IMR-90 (cell line): ENCODE measurements at regions of chr1 and their contacts with region 1.

Region 1: GRCh38 chr1:94755675-94756074 is 64.5 kb upstream of the SLC44A3 start:
- DNase-seq: peak; percentile 99
- ATAC-seq: peak; percentile 83
- H3K4me3 ChIP-seq: no peak overlapping the region
- H3K27ac ChIP-seq: peak overlapping the region; percentile 93
- H3K4me1 ChIP-seq: peaks cover 27% of the 10 kb centered on the region
- H3K27me3 ChIP-seq: no peaks in the 10 kb centered on the region
- CTCF ChIP-seq: no peak
- POLR2A ChIP-seq: no peak
- RAD21 ChIP-seq: 0 out of 2 replicates have a peak, but pooled peaks have one; percentile 1

Region 2: GRCh38 chr1:94660994-94661393 is 94.7 kb before region 1 on chr1:
- CTCF ChIA-PET with region 1: no interaction called
- POLR2A ChIA-PET with region 1: interaction called, 15 read pairs
- dilution Hi-C with region 1: no loop called
- in situ Hi-C with region 1: no loop called
- intact Hi-C with region 1: no loop called
- DNase-seq: peak; percentile 43
- ATAC-seq: peak; percentile 64
- H3K4me3 ChIP-seq: no peak overlapping the region
- H3K27ac ChIP-seq: no peak overlapping the region
- H3K4me1 ChIP-seq: peaks cover 14% of the 10 kb centered on the region; the same call in 1 of the 2 replicates
- H3K27me3 ChIP-seq: no peaks in the 10 kb centered on the region
- CTCF ChIP-seq: no peak
- POLR2A ChIP-seq: no peak
- RAD21 ChIP-seq: no peak

Region 3: GRCh38 chr1:94734963-94735899 is 20.4 kb before region 1 on chr1:
- CTCF ChIA-PET with region 1: no interaction called
- POLR2A ChIA-PET with region 1: no interaction called
- dilution Hi-C with region 1: no loop called
- in situ Hi-C with region 1: no loop called
- intact Hi-C with region 1: no loop called
- DNase-seq: peak; percentile 80
- ATAC-seq: peak; percentile 38
- H3K4me3 ChIP-seq: no peak overlapping the region
- H3K27ac ChIP-seq: peak overlapping the region; percentile 53
- H3K4me1 ChIP-seq: peaks cover 35% of the 10 kb centered on the region
- H3K27me3 ChIP-seq: no peaks in the 10 kb centered on the region
- CTCF ChIP-seq: no peak
- POLR2A ChIP-seq: no peak
- RAD21 ChIP-seq: no peak

Region 4: GRCh38 chr1:94832446-94832845 is 76.8 kb after region 1 on chr1:
- CTCF ChIA-PET with region 1: no interaction called
- POLR2A ChIA-PET with region 1: no interaction called
- dilution Hi-C with region 1: no loop called
- in situ Hi-C with region 1: no loop called
- intact Hi-C with region 1: no loop called
- DNase-seq: peak; percentile 34
- ATAC-seq: peak; percentile 71
- H3K4me3 ChIP-seq: no peak overlapping the region
- H3K27ac ChIP-seq: no peak overlapping the region
- H3K4me1 ChIP-seq: peaks cover 2% of the 10 kb centered on the region; the same call in 1 of the 2 replicates
- H3K27me3 ChIP-seq: no peaks in the 10 kb centered on the region
- CTCF ChIP-seq: no peak
- POLR2A ChIP-seq: no peak
- RAD21 ChIP-seq: no peak